Heart right ventricle (tissue), 16 donors: ENCODE measurements at regions of chr1 and their contacts with region 1.

Region 1: GRCh38 chr1:248906009-248906752 is at the start of gene PGBD2:
- DNase-seq: peak; percentile 93 to 95
- ATAC-seq: peak; percentile 95 to 97 (median 96)
- H3K4me3 ChIP-seq: peak within 1 kb of the TSS; percentile 40 to 80 (median 68)
- H3K27ac ChIP-seq: peak within 1 kb of the TSS; percentile 81 to 98 (median 88)
- H3K4me1 ChIP-seq: peaks cover 0 to 25% (median 15%) of the 10 kb centered on the region in 9 donors
- H3K27me3 ChIP-seq: no peaks in the 10 kb centered on the region
- CTCF ChIP-seq: peak; percentile 54 to 77 (median 64)
- total RNA-seq, gene PGBD2: 1.3 to 3.4 (median 2.2) TPM

Region 2: GRCh38 chr1:248710305-248710900 is 195.8 kb before region 1 on chr1:
- intact Hi-C with region 1: no loop called
- DNase-seq: no peak
- ATAC-seq: peak in 1 of 8 donors; percentile 29
- H3K4me3 ChIP-seq: no peak overlapping the region
- H3K27ac ChIP-seq: peak overlapping the region in 1 of 10 donors; percentile 55
- H3K4me1 ChIP-seq: peaks cover 0 to 27% (median 0%) of the 10 kb centered on the region in 9 donors
- H3K27me3 ChIP-seq: peaks cover 0 to 15% (median 0%) of the 10 kb centered on the region in 7 donors
- CTCF ChIP-seq: no peak

Region 3: GRCh38 chr1:248825909-248826760 is 80.0 kb before region 1 on chr1 and contains the start of gene SH3BP5L:
- intact Hi-C with region 1: loop called in 1 of 10 experiments (anchors 1 kb)
- DNase-seq: peak; percentile 92 to 96
- ATAC-seq: peak; percentile 95 to 98 (median 96)
- H3K4me3 ChIP-seq: peak within 1 kb of the TSS; percentile 32 to 83 (median 62)
- H3K27ac ChIP-seq: peak within 1 kb of the TSS; percentile 90 to 98 (median 93)
- H3K4me1 ChIP-seq: peaks cover 26 to 65% (median 52%) of the 10 kb centered on the region in 9 donors
- H3K27me3 ChIP-seq: no peaks in the 10 kb centered on the region
- CTCF ChIP-seq: peak; percentile 14 to 87 (median 67)
- total RNA-seq, gene SH3BP5L: 14.9 to 26.2 (median 18.0) TPM

Region 4: DNA sequence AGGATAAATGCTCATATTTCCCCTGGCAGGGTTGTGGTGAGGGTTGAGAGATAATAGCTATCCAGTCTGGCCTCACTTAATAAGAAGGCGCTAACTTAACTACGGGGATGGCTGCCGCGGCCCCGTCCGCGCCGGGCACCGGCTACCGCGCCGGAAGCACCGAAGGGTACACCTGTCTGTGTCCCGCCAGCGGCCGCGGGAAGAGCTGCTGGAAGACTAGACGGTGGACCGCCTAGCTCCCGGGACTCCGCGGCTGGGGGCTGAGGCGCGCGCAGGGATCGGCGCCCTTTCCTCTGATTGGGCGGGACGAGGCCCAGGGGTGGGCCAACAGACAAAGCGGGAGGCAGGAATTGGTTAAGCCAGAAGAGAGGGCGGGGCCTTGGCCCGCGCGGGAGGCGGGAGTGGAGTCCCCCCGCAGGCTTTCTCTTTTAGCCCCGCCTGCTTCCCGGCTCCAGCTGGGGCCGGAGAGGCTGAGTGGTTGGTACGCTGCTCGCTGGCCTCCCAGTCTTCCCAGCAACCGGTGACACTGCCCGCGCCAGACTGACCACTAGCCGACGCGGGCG is 68.3 kb before region 1 on chr1 and contains the start of gene ZNF672:
- intact Hi-C with region 1: loop called in 2 of 10 experiments (anchors 1 kb)
- DNase-seq: peak; percentile 98 to 99
- ATAC-seq: peak; percentile 92 to 97 (median 94)
- H3K4me3 ChIP-seq: peak within 1 kb of the TSS; percentile 74 to 97 (median 88)
- H3K27ac ChIP-seq: peak within 1 kb of the TSS; percentile 98 to 100 (median 100)
- H3K4me1 ChIP-seq: peaks cover 11 to 55% (median 42%) of the 10 kb centered on the region in 9 donors
- H3K27me3 ChIP-seq: no peaks in the 10 kb centered on the region
- CTCF ChIP-seq: no peak
- total RNA-seq, gene ZNF672: 31.9 to 44.4 (median 37.3) TPM

Region 5: GRCh38 chr1:248858891-248859889 is 47.0 kb before region 1 on chr1 and contains the start of gene ZNF692:
- intact Hi-C with region 1: loop called in 4 of 10 experiments (anchors 1 to 2 kb)
- DNase-seq: peak; percentile 97 to 98
- ATAC-seq: peak; percentile 93 to 96 (median 95)
- H3K4me3 ChIP-seq: peak within 1 kb of the TSS; percentile 43 to 80 (median 64)
- H3K27ac ChIP-seq: peak within 1 kb of the TSS; percentile 59 to 97 (median 93)
- H3K4me1 ChIP-seq: peaks cover 13 to 47% (median 33%) of the 10 kb centered on the region in 9 donors
- H3K27me3 ChIP-seq: no peaks in the 10 kb centered on the region
- CTCF ChIP-seq: peak in 2 of 9 donors; percentile 8 to 25
- total RNA-seq, gene ZNF692: 7.1 to 26.5 (median 11.8) TPM

Region 6: GRCh38 chr1:248873409-248873992 is 32.7 kb before region 1 on chr1:
- intact Hi-C with region 1: loop called in 2 of 10 experiments (anchors 2 kb)
- DNase-seq: peak; percentile 91 to 95
- ATAC-seq: peak; percentile 93 to 97 (median 96)
- H3K4me3 ChIP-seq: peak overlapping the region; percentile 34 to 81 (median 70)
- H3K27ac ChIP-seq: peak overlapping the region; percentile 74 to 98 (median 93)
- H3K4me1 ChIP-seq: peaks cover 0 to 12% (median 3%) of the 10 kb centered on the region in 9 donors
- H3K27me3 ChIP-seq: no peaks in the 10 kb centered on the region
- CTCF ChIP-seq: no peak